ENCODE measurements at regions of chr10 and their contacts with region 1.

Region 1: GRCh38 chr10:97869091-97870042 is 19.7 kb downstream of the GOLGA7B start:
- DNase-seq: peak; percentile 59
- ATAC-seq: peak; percentile 99
- H3K4me3 ChIP-seq: no peak overlapping the region
- H3K27ac ChIP-seq: no peak overlapping the region
- H3K4me1 ChIP-seq: peaks cover 3% of the 10 kb centered on the region; the same call in 1 of the 2 replicates
- H3K27me3 ChIP-seq: peaks cover 0 to 2% of the 10 kb centered on the region in 2 experiments; a peak in 2 of 4 replicates
- CTCF ChIP-seq: peak; percentile 70 to 86 (median 75)
- EP300 ChIP-seq: no peak
- POLR2A ChIP-seq: no peak
- RAD21 ChIP-seq: peak; percentile 63

Region 2: GRCh38 chr10:97714048-97714371 is 155.4 kb before region 1 on chr10:
- CTCF ChIA-PET with region 1: interaction called, 9 read pairs
- POLR2A ChIA-PET with region 1: no interaction called
- RAD21 ChIA-PET with region 1: no interaction called
- SMC1A ChIA-PET with region 1: no interaction called
- in situ Hi-C with region 1: no loop called
- intact Hi-C with region 1: loop called (anchors 5 kb)
- DNase-seq: no peak
- ATAC-seq: peak; percentile 87
- H3K4me3 ChIP-seq: peak overlapping the region; percentile 74
- H3K27ac ChIP-seq: no peak overlapping the region
- H3K4me1 ChIP-seq: peaks cover 3% of the 10 kb centered on the region; the same call in 1 of the 2 replicates
- H3K27me3 ChIP-seq: peaks cover 0 to 2% of the 10 kb centered on the region in 2 experiments; a peak in 1 of 4 replicates
- CTCF ChIP-seq: peak; percentile 13 to 42 (median 28); a peak in 3 of 6 replicates
- EP300 ChIP-seq: no peak
- POLR2A ChIP-seq: peak; percentile 87
- RAD21 ChIP-seq: no peak

Region 3: GRCh38 chr10:97792141-97792721 is 77.1 kb before region 1 on chr10:
- CTCF ChIA-PET with region 1: interaction called, 42 read pairs
- POLR2A ChIA-PET with region 1: no interaction called
- RAD21 ChIA-PET with region 1: interaction called, 5 read pairs
- SMC1A ChIA-PET with region 1: interaction called, 3 read pairs
- in situ Hi-C with region 1: no loop called
- intact Hi-C with region 1: loop called (anchors 1 kb)
- DNase-seq: no peak
- ATAC-seq: peak; percentile 95; the same call in 2 of the 3 replicates
- H3K4me3 ChIP-seq: no peak overlapping the region
- H3K27ac ChIP-seq: no peak overlapping the region
- H3K4me1 ChIP-seq: no peaks in the 10 kb centered on the region
- H3K27me3 ChIP-seq: peaks cover 0 to 3% of the 10 kb centered on the region in 2 experiments; a peak in 1 of 4 replicates
- CTCF ChIP-seq: peak; percentile 83 to 95 (median 93)
- EP300 ChIP-seq: no peak
- POLR2A ChIP-seq: no peak
- RAD21 ChIP-seq: peak; percentile 72

Region 4: DNA sequence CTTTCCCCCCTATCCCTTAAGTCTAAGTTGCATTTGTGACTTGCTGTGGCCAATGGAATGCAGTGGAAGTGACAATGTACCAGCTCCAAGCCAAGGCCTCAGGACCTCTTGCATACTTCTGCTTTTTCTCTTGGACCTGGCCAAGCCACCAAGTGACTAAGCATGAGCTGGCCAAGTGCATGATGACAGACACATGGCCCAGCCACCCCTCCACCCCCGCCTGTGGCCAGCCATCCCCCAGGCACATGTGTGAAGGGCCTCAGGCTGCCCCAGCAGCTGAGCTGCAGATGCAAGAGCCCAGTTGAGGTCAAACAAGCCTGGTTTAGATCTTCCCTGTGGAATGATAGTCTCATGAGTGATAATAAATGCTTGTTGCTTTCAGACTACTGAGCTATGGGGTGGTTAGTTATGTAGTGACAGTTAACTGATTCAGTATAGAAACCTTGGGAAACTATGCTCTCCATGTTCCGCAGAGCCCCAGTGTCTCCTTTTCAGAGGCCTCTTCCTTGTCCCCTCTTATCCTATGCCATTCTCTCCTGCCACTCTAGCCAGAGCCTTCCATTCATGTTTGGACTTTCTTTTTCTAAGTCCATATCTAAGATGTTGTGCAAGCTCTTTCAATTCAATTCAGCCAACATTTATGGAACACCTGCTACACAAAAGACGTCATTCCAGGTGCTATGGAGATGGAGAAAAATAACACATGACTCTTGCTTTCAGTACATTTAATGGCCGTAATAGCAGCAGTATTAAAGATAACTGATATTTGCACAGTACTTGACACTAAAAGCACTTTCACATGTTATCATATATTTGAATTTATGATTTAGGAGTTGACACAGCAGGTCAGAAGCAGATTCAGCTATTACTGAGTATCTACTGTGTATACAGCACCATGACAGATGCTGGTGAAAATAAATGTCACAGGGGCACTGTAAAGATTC is 454.1 kb after region 1 on chr10:
- CTCF ChIA-PET with region 1: no interaction called
- POLR2A ChIA-PET with region 1: no interaction called
- RAD21 ChIA-PET with region 1: no interaction called
- SMC1A ChIA-PET with region 1: no interaction called
- in situ Hi-C with region 1: no loop called
- intact Hi-C with region 1: no loop called
- DNase-seq: no peak
- ATAC-seq: peak; percentile 48
- H3K4me3 ChIP-seq: no peak overlapping the region
- H3K27ac ChIP-seq: no peak overlapping the region
- H3K4me1 ChIP-seq: no peaks in the 10 kb centered on the region
- H3K27me3 ChIP-seq: peaks cover 0 to 3% of the 10 kb centered on the region in 2 experiments; a peak in 1 of 4 replicates
- CTCF ChIP-seq: no peak
- EP300 ChIP-seq: no peak
- POLR2A ChIP-seq: no peak
- RAD21 ChIP-seq: no peak

Measured in GM12878 (cell line).